ENCODE measurements at regions of chr1 and their contacts with region 1.

Region 1: DNA sequence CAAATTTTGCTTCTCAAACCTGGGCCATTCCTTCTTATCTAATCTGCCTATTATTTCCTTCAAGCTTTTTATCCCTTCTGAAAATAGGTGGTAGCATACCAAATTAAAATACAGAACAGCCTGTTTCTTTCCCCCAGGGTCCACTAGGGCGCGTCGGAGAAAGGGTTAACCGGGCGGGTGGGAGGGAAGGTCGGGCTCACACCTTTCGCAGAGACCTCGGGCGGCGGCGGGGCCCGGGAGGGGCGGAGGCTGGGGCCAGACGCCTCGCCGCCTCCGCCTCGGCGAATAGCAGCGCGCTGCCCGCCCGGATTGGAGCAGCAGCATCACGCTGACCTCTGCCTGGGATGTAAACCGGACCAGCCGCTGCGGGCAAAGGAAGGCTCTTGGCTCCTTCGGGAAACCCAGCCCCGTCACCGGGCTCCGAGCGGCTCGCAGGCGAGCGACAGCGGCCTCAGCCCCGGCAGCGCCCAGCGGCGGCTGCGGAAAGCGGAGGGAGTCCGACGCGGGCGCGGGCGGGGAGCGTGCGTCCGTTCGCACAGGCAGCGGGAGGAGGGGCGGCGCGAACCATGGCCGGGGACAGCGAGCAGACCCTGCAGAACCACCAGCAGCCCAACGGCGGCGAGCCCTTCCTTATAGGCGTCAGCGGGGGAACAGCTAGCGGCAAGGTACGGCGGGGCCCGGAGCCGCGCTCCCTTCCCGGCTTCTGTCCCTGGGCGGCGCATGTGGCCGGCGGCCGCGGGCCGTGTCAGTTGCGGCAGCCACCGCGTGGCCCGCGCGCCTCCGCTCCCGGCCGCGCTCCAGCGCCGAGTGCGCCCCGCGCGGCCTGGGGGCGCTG is at the start of gene UCK2:
- DNase-seq: no peak
- ATAC-seq: peak; percentile 95
- H3K4me3 ChIP-seq: peak within 1 kb of the TSS; percentile 68 to 82
- H3K27ac ChIP-seq: peak within 1 kb of the TSS; percentile 96
- H3K4me1 ChIP-seq: peaks cover 8% of the 10 kb centered on the region; the same call in 1 of the 2 replicates
- H3K27me3 ChIP-seq: no peaks in the 10 kb centered on the region
- CTCF ChIP-seq: peak; percentile 52
- total RNA-seq, gene UCK2: 91.2 TPM

Region 2: DNA sequence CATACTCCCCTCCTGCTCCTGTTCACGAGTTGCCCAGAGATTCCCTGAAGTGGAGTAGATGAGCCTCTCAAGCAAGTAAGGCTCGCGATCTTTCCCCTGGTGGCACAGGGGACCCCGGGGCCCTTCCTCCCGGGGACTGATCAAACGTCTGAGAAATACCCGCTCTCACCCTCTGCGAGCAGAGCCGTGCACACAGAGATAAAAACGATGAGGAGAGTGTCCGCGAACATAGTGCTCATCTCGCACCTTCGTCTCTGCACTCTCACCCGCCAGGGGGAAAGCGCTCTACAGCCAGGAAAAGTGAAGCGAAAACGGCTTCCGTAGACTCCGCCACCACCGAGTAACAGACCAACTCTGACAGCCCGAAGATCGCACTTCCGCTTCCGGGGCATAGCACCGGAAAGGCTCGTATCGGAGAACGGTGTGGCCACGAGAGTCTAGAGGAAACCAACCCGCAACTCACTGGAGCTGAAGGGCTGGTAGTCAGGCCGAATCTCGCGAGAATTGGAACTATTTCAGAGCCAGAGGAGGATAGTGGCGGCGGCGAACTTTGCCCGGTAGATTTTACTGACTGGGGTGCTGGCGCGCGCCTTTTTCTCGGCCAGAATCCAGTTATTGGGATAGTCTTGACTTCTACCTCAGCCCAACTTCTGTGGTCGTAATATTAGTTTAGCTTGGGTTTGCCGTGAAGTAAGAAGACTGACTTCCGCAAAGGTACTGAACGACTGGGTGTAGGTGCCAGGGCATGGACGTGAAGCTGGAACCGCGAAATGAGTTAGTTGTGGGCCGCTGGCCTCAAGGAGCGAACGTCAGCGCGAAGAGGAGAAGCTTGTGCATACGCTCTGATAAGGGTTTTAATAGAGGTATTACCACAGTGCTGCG is 58.7 kb before region 1 on chr1 and contains the start of gene TMCO1:
- CTCF ChIA-PET with region 1: no interaction called
- POLR2A ChIA-PET with region 1: interaction called, 7 read pairs
- in situ Hi-C with region 1: no loop called
- intact Hi-C with region 1: loop called (anchors 2 kb)
- DNase-seq: peak; percentile 92
- ATAC-seq: peak; percentile 99
- H3K4me3 ChIP-seq: peak within 1 kb of the TSS; percentile 78 to 94
- H3K27ac ChIP-seq: peak within 1 kb of the TSS; percentile 96
- H3K4me1 ChIP-seq: peaks cover 15% of the 10 kb centered on the region
- H3K27me3 ChIP-seq: no peaks in the 10 kb centered on the region
- CTCF ChIP-seq: no peak
- total RNA-seq, gene TMCO1: 103 TPM

Region 3: DNA sequence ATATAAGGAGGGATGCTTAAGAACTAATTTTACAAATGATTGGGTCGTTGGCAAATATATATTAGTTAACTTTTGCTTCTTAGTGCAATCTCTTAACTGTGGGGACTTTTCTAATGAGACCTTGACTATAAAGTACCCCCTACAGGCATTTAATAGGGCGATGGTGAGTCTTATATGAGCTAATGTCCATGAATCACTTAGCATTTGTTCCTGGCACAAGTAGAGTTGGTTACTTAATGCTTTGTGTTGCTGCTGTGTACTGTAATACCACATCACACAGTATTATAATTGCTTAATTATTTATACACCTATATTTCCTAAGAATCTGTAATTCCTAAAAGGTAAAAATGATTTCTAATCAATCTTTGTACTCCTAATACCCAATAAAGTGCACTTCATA is 33.5 kb before region 1 on chr1:
- CTCF ChIA-PET with region 1: no interaction called
- POLR2A ChIA-PET with region 1: interaction called, 18 read pairs
- in situ Hi-C with region 1: no loop called
- intact Hi-C with region 1: no loop called
- DNase-seq: no peak
- ATAC-seq: no peak
- H3K4me3 ChIP-seq: no peak overlapping the region
- H3K27ac ChIP-seq: no peak overlapping the region
- H3K4me1 ChIP-seq: no peaks in the 10 kb centered on the region
- H3K27me3 ChIP-seq: no peaks in the 10 kb centered on the region
- CTCF ChIP-seq: no peak

Region 4: DNA sequence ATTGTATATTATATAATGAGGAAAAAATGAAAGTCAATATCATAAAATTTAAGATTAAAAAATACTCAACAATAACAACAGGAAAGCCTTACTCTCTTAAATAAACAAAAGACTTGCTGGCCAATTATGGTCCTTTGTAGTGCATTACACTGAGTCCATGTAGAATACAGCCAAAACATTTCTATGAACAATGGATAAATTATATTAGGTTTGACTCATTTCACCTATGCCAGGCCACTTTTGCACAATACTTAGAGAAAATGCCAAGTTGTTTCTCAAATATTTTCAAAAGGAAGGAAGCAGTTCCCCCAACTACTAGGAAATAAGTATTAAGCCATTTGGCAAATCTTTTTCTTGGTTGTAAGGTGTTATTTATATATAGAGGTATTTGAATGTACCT is 19.9 kb before region 1 on chr1:
- CTCF ChIA-PET with region 1: no interaction called
- POLR2A ChIA-PET with region 1: no interaction called
- in situ Hi-C with region 1: no loop called
- intact Hi-C with region 1: no loop called
- DNase-seq: no peak
- ATAC-seq: no peak
- H3K4me3 ChIP-seq: no peak overlapping the region
- H3K27ac ChIP-seq: no peak overlapping the region
- H3K4me1 ChIP-seq: no peaks in the 10 kb centered on the region
- H3K27me3 ChIP-seq: no peaks in the 10 kb centered on the region
- CTCF ChIP-seq: no peak

Region 5: DNA sequence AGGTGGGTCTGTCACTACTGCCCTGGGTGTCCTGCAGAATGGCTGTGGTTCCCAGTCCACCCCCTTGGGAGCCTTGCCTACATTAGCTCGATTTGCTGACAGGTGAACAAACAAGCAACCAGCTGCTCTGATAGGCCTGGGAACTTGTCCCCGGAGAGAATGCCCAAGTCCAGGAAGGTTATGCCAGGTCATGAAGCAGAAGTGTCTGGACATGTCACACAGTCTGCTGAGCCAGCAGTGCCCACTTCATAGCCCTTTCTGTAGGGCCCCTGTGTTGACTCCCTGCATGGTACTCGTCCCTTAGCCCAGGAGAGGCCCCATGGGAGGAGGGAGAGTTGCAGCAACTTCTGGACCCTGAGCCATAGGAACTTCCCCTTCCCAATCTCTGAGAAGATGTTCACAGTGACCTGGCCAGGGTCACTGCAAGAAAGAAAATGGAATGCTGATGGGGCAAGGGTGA is 30.9 kb after region 1 on chr1:
- CTCF ChIA-PET with region 1: no interaction called
- POLR2A ChIA-PET with region 1: interaction called, 14 read pairs
- in situ Hi-C with region 1: no loop called
- intact Hi-C with region 1: no loop called
- DNase-seq: no peak
- ATAC-seq: 0 out of 2 replicates have a peak, but pooled peaks have one; percentile 22
- H3K4me3 ChIP-seq: no peak overlapping the region
- H3K27ac ChIP-seq: no peak overlapping the region
- H3K4me1 ChIP-seq: peaks cover 15% of the 10 kb centered on the region
- H3K27me3 ChIP-seq: no peaks in the 10 kb centered on the region
- CTCF ChIP-seq: no peak

Region 6: DNA sequence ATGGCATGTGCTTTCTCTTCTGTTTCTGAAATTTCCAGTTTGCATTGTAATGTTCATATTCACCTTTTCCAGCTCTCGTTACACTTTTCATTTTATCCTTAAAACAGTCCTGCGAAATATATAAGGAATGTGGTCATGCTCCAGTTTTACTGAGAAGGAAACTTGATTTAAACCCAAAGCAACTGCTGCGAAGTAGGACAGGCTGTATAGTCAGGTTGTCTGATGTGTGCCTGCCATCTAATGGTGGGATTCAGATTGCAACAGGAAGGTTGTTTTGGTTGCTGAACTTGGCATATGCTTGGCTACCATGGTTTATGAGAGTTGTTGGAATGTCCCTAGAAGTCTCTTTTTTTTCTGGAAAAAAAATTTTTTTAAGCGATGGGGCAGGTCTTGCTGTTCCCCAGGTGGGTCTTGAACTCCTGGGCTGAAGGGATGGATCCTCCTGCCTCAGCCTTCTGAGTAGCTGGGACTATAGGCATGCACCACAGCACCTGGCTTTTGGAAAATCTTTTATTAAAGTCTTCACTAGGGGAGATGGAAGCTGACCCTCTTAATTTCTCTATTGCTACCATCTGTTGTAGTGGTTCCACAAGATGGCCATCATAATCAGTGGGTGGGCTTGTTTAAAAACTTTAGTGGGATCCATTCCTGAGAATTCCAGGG is 86.8 kb after region 1 on chr1:
- CTCF ChIA-PET with region 1: no interaction called
- POLR2A ChIA-PET with region 1: no interaction called
- in situ Hi-C with region 1: no loop called
- intact Hi-C with region 1: loop called (anchors 5 kb)
- DNase-seq: peak; percentile 67
- ATAC-seq: peak; percentile 84
- H3K4me3 ChIP-seq: no peak overlapping the region
- H3K27ac ChIP-seq: no peak overlapping the region
- H3K4me1 ChIP-seq: no peaks in the 10 kb centered on the region
- H3K27me3 ChIP-seq: no peaks in the 10 kb centered on the region
- CTCF ChIP-seq: peak; percentile 84

Measured in Panc1 (cell line).